Activated CD4-positive, alpha-beta memory T cell treated with anti-CD3 and anti-CD28 coated beads, Interleukin-2, amount 10 ng/mL, durations not matched to agents 7 days and 5 days (primary cell): ENCODE measurements at regions of chr10 and their contacts with region 1.

Region 1: GRCh38 chr10:56360967-56361612 is at the start of gene ZWINT:
- DNase-seq: peak; percentile 95
- H3K4me3 Mint-ChIP-seq: peak within 1 kb of the TSS; percentile 91
- H3K27ac Mint-ChIP-seq: peak within 1 kb of the TSS; percentile 81
- H3K4me1 Mint-ChIP-seq: peaks cover 62% of the 10 kb centered on the region
- H3K27me3 Mint-ChIP-seq: no peaks in the 10 kb centered on the region
- total RNA-seq, gene ZWINT: 75.9 to 78.2 TPM

Region 2: GRCh38 chr10:56327117-56327516 is 34.0 kb before region 1 on chr10:
- CTCF ChIA-PET with region 1: no interaction called
- POLR2A ChIA-PET with region 1: no interaction called
- DNase-seq: no peak
- H3K4me3 Mint-ChIP-seq: no peak overlapping the region
- H3K27ac Mint-ChIP-seq: no peak overlapping the region
- H3K4me1 Mint-ChIP-seq: no peaks in the 10 kb centered on the region
- H3K27me3 Mint-ChIP-seq: no peaks in the 10 kb centered on the region

Region 3: GRCh38 chr10:56349611-56350010 is 11.5 kb before region 1 on chr10:
- CTCF ChIA-PET with region 1: interaction called, 11 read pairs
- POLR2A ChIA-PET with region 1: interaction called, 10 read pairs
- DNase-seq: no peak
- H3K4me3 Mint-ChIP-seq: no peak overlapping the region
- H3K27ac Mint-ChIP-seq: no peak overlapping the region
- H3K4me1 Mint-ChIP-seq: no peaks in the 10 kb centered on the region
- H3K27me3 Mint-ChIP-seq: no peaks in the 10 kb centered on the region

Region 4: DNA sequence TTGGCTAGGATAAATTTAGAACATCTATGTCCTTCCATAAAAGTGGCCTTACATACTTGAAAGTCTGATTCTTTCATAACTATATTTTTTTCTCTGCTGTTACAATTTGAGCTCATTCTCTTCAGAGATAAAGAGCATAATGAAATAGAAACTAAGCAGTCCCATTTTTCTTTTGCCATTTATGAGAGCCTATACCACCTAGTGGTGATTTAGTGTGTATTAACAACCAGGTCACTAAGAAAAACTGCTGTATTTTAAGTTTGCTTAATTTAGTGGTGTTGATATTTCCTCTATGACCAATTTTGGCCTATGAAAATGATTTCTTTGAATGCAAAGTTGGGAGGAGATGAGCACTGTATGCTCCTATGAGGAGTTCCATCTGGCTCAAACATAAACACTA is 88.7 kb after region 1 on chr10:
- CTCF ChIA-PET with region 1: no interaction called
- POLR2A ChIA-PET with region 1: no interaction called
- DNase-seq: no peak
- H3K4me3 Mint-ChIP-seq: no peak overlapping the region
- H3K27ac Mint-ChIP-seq: no peak overlapping the region
- H3K4me1 Mint-ChIP-seq: no peaks in the 10 kb centered on the region
- H3K27me3 Mint-ChIP-seq: no peaks in the 10 kb centered on the region